ENCODE measurements at regions of chr14 and their contacts with region 1.

Region 1: GRCh38 chr14:95993768-95994592 is 45.2 kb upstream of the C14orf132 start:
- DNase-seq: peak; percentile 17
- ATAC-seq: peak; percentile 75
- H3K4me3 ChIP-seq: no peak overlapping the region
- H3K27ac ChIP-seq: no peak overlapping the region
- H3K4me1 ChIP-seq: no peaks in the 10 kb centered on the region
- H3K27me3 ChIP-seq: peaks cover 0 to 2% of the 10 kb centered on the region in 2 experiments; a peak in 2 of 4 replicates
- CTCF ChIP-seq: peak; percentile 78 to 80 (median 79)
- EP300 ChIP-seq: no peak
- POLR2A ChIP-seq: no peak
- RAD21 ChIP-seq: peak; percentile 93

Region 2: DNA sequence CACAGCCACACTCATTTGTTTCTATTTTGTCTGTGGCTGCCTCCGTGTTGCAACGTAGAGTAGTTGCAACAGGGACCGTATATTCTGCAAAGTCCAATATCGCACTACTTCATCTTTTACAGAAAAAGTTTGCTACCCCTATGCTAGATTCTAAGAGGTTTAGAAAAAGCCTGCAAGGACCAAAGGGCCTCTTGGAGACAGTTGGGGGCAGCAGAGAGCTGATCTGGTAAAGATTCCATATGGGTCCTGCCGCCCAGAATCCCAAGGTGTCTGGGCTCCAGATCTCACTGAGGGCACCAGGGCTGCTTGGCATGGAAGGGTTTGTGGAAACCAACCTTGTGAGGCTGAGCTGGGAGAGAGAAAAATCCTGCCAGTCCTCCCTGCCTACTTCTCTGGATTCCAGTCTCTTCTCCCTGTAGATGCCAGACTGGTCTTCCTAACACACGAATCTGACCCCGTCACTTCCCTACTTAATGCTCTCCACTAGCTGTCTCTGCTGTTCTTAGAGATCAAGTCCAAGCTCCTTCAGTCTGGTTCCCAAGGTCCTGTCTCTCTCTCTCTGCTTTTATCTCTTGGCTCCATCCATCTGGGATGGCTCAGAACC is 384.5 kb before region 1 on chr14:
- CTCF ChIA-PET with region 1: interaction called, 4 read pairs
- POLR2A ChIA-PET with region 1: no interaction called
- RAD21 ChIA-PET with region 1: no interaction called
- SMC1A ChIA-PET with region 1: interaction called, 4 read pairs
- in situ Hi-C with region 1: no loop called
- intact Hi-C with region 1: loop called (anchors 1 kb)
- DNase-seq: no peak
- ATAC-seq: peak; percentile 83
- H3K4me3 ChIP-seq: no peak overlapping the region
- H3K27ac ChIP-seq: no peak overlapping the region
- H3K4me1 ChIP-seq: no peaks in the 10 kb centered on the region
- H3K27me3 ChIP-seq: no peaks in the 10 kb centered on the region; a peak in 1 of 4 replicates
- CTCF ChIP-seq: peak; percentile 67 to 71 (median 68)
- EP300 ChIP-seq: no peak
- POLR2A ChIP-seq: no peak
- RAD21 ChIP-seq: peak; percentile 84

Region 3: DNA sequence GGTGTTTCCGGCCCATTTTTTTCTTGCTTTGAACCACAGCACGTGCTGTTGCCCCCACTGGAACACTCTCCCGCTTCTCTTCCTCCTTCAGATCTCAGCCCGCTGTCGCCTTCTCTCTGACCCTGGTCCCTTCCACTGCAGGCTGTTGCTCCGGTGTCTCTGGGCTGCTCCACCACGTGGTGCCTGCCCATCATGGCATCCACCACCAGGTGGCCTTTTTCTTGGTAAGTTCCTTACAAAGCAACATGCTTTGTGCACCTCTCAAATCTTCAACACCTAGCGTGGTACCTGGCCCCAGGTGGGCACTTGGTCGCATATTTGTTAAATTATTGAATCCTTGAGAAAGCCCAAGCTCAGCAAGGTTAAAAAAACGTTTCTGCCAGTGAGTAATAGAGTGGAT is 98.3 kb before region 1 on chr14:
- CTCF ChIA-PET with region 1: interaction called, 4 read pairs
- POLR2A ChIA-PET with region 1: no interaction called
- RAD21 ChIA-PET with region 1: no interaction called
- SMC1A ChIA-PET with region 1: interaction called, 3 read pairs
- in situ Hi-C with region 1: no loop called
- intact Hi-C with region 1: loop called (anchors 2 kb)
- DNase-seq: no peak
- ATAC-seq: peak; percentile 81
- H3K4me3 ChIP-seq: no peak overlapping the region
- H3K27ac ChIP-seq: no peak overlapping the region
- H3K4me1 ChIP-seq: no peaks in the 10 kb centered on the region
- H3K27me3 ChIP-seq: peaks cover 0 to 7% of the 10 kb centered on the region in 2 experiments; a peak in 3 of 4 replicates
- CTCF ChIP-seq: peak; percentile 34 to 46 (median 45); a peak in 5 of 6 replicates
- EP300 ChIP-seq: no peak
- POLR2A ChIP-seq: no peak
- RAD21 ChIP-seq: no peak

Region 4: GRCh38 chr14:95981965-95982719 is 11.8 kb before region 1 on chr14:
- CTCF ChIA-PET with region 1: interaction called, 10 read pairs
- POLR2A ChIA-PET with region 1: no interaction called
- RAD21 ChIA-PET with region 1: no interaction called
- SMC1A ChIA-PET with region 1: no interaction called
- in situ Hi-C with region 1: no loop called
- intact Hi-C with region 1: no loop called
- DNase-seq: no peak
- ATAC-seq: no peak
- H3K4me3 ChIP-seq: no peak overlapping the region
- H3K27ac ChIP-seq: no peak overlapping the region
- H3K4me1 ChIP-seq: no peaks in the 10 kb centered on the region
- H3K27me3 ChIP-seq: no peaks in the 10 kb centered on the region; a peak in 2 of 4 replicates
- CTCF ChIP-seq: no peak
- EP300 ChIP-seq: no peak
- POLR2A ChIP-seq: no peak
- RAD21 ChIP-seq: no peak

Measured in GM12878 (cell line).